ENCODE measurements at regions of chr1 and their contacts with region 1.

Region 1: DNA sequence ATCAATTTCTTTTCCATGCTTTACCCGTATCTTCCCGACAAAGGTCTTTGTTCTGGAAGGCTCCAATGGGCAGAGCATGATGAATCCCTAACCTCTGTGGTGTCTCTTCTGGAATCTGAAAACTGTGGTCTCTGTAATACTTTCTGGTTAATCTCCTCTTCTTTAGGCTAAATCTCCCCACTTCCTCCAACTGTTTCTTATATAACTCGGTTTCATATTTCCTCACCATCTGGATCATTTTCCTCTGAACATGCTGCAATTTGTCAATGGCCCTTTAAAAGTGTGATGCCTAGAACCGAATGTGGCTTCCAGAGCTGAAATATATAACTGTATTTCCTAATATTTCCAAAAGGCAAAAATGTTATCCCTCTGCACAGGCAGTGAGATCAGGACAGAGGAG is 66.1 kb downstream of the ALG14 start:
- DNase-seq: no peak
- ATAC-seq: no peak
- H3K4me3 ChIP-seq: no peak overlapping the region
- H3K27ac ChIP-seq: no peak overlapping the region
- H3K4me1 ChIP-seq: peaks cover 0 to 17% (median 10%) of the 10 kb centered on the region in 12 donors
- H3K27me3 ChIP-seq: no peaks in the 10 kb centered on the region
- CTCF ChIP-seq: no peak
- POLR2A ChIP-seq: no peak

Region 2: DNA sequence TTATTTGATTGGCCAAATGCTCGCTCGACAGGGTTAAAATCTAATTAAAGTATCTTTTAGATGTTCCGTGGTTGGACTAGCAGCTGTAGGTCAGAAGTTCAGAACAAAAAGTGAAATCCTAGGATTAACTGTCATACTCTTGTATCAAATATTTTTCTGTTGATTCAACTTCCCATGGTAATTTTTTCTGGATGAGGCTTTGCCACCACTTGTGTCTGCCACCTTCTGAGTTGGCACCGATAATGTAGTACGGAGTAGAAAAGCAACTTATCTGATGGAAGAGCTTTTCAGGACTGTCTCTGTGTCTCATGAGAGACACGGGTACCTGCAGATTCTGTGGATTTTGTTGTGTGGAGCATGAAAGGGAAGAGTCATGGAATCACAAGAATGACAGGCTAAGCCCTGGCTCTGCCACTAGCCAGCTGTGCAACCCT is 35.2 kb before region 1 on chr1:
- intact Hi-C with region 1: loop called in 1 of 10 experiments (anchors 5 kb)
- DNase-seq: no peak
- ATAC-seq: peak in 1 of 4 donors; percentile 30
- H3K4me3 ChIP-seq: no peak overlapping the region
- H3K27ac ChIP-seq: peak overlapping the region in 9 of 12 donors; percentile 14 to 67 (median 29)
- H3K4me1 ChIP-seq: peaks cover 0 to 39% (median 25%) of the 10 kb centered on the region in 12 donors
- H3K27me3 ChIP-seq: no peaks in the 10 kb centered on the region
- CTCF ChIP-seq: no peak
- POLR2A ChIP-seq: no peak

Region 3: DNA sequence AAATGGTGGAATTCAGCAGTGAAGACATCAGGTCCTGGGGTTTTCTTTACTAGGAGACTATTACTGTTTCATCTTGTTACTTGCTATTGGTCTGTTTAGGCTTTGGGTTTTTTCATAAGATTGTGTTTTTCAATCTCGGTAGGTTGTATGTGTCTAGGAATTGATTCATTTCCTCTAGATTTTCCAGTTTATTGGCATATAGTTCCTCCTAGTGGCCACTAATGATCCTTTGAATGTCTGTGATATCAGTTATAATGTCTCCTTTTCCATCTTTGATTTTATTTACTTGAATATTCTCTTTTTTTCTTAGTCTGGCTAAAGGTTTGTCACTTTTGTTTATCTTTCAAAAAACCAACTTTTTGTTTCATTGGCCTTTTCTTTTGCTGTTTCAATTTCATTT is 460.4 kb after region 1 on chr1:
- intact Hi-C with region 1: no loop called
- DNase-seq: no peak
- ATAC-seq: no peak
- H3K4me3 ChIP-seq: no peak overlapping the region
- H3K27ac ChIP-seq: no peak overlapping the region
- H3K4me1 ChIP-seq: no peaks in the 10 kb centered on the region
- H3K27me3 ChIP-seq: no peaks in the 10 kb centered on the region
- CTCF ChIP-seq: peak in 8 of 12 donors; percentile 8 to 39 (median 23)
- POLR2A ChIP-seq: no peak

Region 4: DNA sequence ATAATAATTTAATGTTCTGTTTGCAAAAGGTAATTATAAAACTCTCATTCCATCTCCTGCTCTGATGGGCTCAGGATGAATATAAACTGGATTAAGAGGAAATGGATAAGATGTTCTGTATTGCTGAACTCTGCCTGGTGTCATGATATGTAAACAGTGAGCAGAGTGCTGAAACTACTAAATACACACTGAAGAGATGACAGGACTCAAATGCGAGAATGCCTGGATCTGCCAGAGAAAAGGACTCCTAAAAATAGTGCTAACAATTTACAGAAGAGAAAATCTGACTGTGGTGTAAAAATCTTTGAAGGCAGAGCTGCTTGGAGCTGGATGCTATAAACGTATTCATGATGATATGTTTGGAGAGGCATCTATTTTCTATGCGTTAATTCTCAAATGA is 530.5 kb after region 1 on chr1:
- intact Hi-C with region 1: no loop called
- DNase-seq: no peak
- ATAC-seq: no peak
- H3K4me3 ChIP-seq: no peak overlapping the region
- H3K27ac ChIP-seq: no peak overlapping the region
- H3K4me1 ChIP-seq: no peaks in the 10 kb centered on the region
- H3K27me3 ChIP-seq: no peaks in the 10 kb centered on the region
- CTCF ChIP-seq: no peak
- POLR2A ChIP-seq: no peak